Left lung (tissue), 14 donors: ENCODE measurements at regions of chr20 and their contacts with region 1.

Region 1: DNA sequence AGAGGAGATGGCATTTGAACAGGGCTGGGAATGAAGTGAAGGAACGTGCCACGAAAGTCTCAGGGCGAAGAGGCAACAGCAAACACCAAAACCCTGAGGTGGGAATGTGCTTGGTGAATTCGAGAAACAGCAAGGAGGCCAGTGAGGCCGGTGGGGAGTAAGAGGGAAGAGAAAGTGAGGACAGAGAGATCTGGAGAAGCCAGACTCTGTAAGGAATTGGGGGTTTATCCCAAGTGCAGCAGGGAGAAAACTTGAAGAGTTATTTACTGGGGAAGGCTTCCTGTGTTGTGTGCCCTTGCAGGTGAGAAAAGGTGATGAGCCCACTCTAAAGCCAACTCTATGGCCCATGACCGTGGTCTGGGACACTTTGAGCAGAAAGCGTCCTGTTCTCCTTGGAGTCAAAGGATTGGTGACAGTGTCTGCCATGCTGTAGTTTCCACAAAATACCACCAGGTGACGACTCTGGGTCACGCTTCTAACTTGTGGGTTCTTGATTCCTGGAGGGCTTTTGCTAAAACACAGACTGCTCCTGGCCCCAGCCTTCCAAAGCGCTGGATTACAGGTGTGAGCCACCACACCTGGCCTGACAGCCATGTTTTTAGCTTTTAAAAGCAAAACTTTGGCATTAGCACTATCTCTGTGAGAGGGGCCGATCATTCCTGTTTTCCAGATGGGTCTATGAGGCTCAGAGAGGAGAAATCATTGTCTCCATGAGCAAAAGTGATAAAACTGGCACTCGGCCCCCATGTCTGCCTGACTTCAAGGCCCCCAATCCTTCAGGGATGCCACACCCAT is 18.0 kb upstream of the CSNK2A1 start:
- DNase-seq: peak in 3 of 4 donors; percentile 41 to 74 (median 42)
- ATAC-seq: peak; percentile 94
- H3K4me3 ChIP-seq: no peak overlapping the region
- H3K27ac ChIP-seq: no peak overlapping the region
- H3K4me1 ChIP-seq: no peaks in the 10 kb centered on the region
- H3K27me3 ChIP-seq: peaks cover 0 to 7% of the 10 kb centered on the region in 2 donors
- CTCF ChIP-seq: peak; percentile 87 to 96

Region 2: DNA sequence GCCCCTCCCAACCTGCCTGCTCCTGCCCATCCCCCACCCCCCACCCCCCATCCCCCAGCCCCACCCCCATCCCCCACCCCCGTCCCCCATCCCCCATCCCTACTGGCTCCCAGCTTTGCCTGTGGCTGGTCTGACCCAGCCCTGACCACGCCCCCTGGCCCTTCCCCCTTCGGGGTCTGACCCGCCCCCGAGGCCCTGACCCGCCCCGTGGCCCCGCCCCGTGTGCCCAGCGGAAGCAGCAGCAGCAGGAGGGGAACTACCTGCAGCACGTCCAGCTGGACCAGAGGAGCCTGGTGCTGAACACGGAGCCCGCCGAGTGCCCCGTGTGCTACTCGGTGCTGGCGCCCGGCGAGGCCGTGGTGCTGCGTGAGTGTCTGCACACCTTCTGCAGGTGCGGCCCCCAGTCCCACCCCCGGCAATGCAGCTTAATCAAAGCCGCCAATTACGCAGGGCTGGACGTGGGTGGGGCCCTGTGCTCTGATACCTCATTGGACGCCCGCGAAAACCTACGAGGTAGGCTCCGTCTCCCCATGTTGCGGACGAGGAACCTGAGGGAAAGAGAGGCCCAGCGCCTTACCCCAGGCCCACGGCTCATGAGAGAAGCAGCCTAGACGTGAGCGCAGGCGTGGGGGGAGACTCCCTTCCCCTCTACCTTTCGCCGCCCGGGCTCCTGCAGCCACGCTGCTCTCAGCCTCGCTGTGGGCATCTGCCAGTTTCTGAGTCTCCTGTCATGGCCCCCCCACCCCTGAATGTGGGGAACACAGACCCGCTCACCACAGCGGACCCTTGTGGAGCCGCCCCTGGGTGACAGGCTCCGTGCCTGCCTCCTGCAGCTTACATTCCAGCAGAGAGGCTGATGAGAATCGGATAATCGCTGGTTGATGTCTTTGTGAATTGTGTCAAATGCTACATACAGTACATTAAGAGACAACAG is 140.7 kb before region 1 on chr20:
- intact Hi-C with region 1: no loop called
- DNase-seq: peak in 1 of 4 donors; percentile 91
- ATAC-seq: no peak
- H3K4me3 ChIP-seq: no peak overlapping the region
- H3K27ac ChIP-seq: no peak overlapping the region
- H3K4me1 ChIP-seq: peaks cover 0 to 8% of the 10 kb centered on the region in 2 donors
- H3K27me3 ChIP-seq: no peaks in the 10 kb centered on the region
- CTCF ChIP-seq: no peak

Region 3: DNA sequence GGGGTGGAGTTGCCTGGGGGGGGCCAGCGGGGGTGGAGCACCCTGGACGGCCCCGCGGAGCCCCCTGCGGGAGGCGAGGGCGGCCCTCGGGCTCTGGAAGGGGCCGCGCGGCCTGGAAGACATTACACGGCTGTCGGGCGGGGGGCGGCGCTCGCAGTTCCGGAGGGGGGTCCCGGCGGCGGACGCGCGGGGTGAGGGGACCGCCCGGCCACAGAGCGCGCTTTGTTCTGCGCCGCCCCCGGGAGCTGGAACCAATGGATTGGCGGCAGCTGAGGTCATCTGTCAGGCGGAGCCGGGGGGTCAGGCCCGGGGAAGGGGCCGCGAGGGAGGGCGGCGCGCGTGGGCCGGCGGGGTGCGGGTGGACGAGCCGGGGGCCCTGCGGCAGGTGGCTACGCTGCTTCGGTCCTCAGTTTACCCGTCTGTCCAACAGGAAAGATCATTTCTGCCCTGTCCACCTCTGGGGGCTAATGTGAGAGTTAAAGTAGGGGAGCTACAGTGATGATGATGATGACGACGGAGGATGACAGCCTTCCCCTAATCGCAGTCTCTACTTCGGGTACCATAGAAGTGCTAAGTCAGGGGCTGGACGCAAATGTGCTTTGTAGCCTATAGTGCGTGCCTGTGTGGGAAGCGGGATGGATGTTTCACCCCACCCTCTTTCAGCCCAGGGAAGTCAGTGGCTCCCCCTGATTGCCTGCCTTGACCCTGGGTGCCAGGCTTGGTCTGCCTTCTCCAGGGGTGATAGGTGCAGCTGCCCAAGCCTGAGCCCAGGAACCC is 81.0 kb after region 1 on chr20:
- intact Hi-C with region 1: loop called in 1 of 2 experiments (anchors 5 kb)
- DNase-seq: peak in 3 of 4 donors; percentile 36 to 76 (median 58)
- ATAC-seq: no peak
- H3K4me3 ChIP-seq: peak overlapping the region in 1 of 2 donors; percentile 14
- H3K27ac ChIP-seq: no peak overlapping the region
- H3K4me1 ChIP-seq: peaks cover 0 to 16% of the 10 kb centered on the region in 2 donors
- H3K27me3 ChIP-seq: peaks cover 0 to 20% of the 10 kb centered on the region in 2 donors
- CTCF ChIP-seq: no peak

Region 4: GRCh38 chr20:736897-737296 is 175.3 kb after region 1 on chr20:
- intact Hi-C with region 1: loop called in 1 of 2 experiments (anchors 5 kb)
- DNase-seq: no peak
- ATAC-seq: no peak
- H3K4me3 ChIP-seq: no peak overlapping the region
- H3K27ac ChIP-seq: no peak overlapping the region
- H3K4me1 ChIP-seq: no peaks in the 10 kb centered on the region
- H3K27me3 ChIP-seq: peaks cover 0 to 10% of the 10 kb centered on the region in 2 donors
- CTCF ChIP-seq: no peak